Heart left ventricle (tissue), 16 donors: ENCODE measurements at regions of chr9 and their contacts with region 1.

Region 1: GRCh38 chr9:124708633-124709291 is 62.3 kb downstream of the NR6A1 start:
- DNase-seq: no peak
- ATAC-seq: no peak
- H3K4me3 ChIP-seq: no peak overlapping the region
- H3K27ac ChIP-seq: no peak overlapping the region
- H3K4me1 ChIP-seq: peaks cover 0 to 13% (median 0%) of the 10 kb centered on the region in 12 donors
- H3K27me3 ChIP-seq: no peaks in the 10 kb centered on the region
- CTCF ChIP-seq: no peak
- POLR2A ChIP-seq: no peak

Region 2: DNA sequence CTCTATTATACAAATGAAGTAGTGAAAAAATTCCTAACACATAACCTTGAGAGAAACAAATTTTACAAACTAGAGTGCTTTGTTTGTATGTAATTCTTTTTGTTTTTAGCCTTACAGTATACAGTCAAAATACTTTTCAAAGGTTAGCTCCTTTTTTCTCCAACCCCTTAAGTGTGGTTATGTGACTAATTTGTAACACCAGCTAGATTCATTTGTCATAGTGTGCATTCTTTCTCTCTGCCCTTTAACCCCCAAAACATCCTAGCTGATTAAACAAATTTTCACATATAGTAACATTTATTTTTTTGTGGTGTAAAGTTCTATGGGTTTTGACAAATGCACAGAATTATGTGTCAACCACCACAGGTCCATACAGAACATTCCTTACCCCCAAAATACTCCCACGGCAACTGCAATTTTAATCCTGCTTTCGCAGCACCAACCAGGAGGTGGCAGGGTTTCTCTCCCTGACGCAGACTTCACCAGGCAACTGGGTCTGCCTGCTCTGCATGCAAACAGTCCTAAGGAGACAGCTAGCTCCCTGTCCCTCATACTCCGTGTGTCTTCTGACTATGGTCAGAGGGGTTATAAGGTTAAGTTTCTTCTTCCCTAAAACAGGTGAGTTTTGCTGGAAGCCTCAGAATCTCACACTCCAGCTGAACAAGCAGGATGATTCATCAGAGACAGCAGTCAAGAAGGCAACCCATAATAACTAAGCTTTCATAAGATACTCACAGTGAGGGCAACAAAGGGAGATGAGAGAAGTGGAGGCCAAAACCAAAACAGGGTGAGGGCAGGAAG is 157.1 kb before region 1 on chr9:
- intact Hi-C with region 1: loop called (anchors 1 to 10 kb)
- DNase-seq: peak in 4 of 5 donors; percentile 15 to 32 (median 27)
- ATAC-seq: peak; percentile 68 to 85 (median 76)
- H3K4me3 ChIP-seq: no peak overlapping the region
- H3K27ac ChIP-seq: no peak overlapping the region
- H3K4me1 ChIP-seq: peaks cover 0 to 17% (median 0%) of the 10 kb centered on the region in 12 donors
- H3K27me3 ChIP-seq: no peaks in the 10 kb centered on the region
- CTCF ChIP-seq: peak in 11 of 12 donors; percentile 15 to 61 (median 50)
- POLR2A ChIP-seq: no peak

Region 3: GRCh38 chr9:124743686-124744348 is 35.1 kb after region 1 on chr9:
- intact Hi-C with region 1: no loop called
- DNase-seq: no peak
- ATAC-seq: no peak
- H3K4me3 ChIP-seq: no peak overlapping the region
- H3K27ac ChIP-seq: no peak overlapping the region
- H3K4me1 ChIP-seq: peaks cover 0 to 4% (median 0%) of the 10 kb centered on the region in 12 donors
- H3K27me3 ChIP-seq: no peaks in the 10 kb centered on the region
- CTCF ChIP-seq: no peak
- POLR2A ChIP-seq: no peak

Region 4: GRCh38 chr9:124771021-124771866 is 62.5 kb after region 1 on chr9 and contains the start of gene NR6A1:
- intact Hi-C with region 1: no loop called
- DNase-seq: peak; percentile 95 to 98 (median 97)
- ATAC-seq: peak; percentile 94 to 97 (median 95)
- H3K4me3 ChIP-seq: peak within 1 kb of the TSS; percentile 68 to 96 (median 90)
- H3K27ac ChIP-seq: peak within 1 kb of the TSS in 11 of 12 donors; percentile 50 to 82 (median 70)
- H3K4me1 ChIP-seq: peaks cover 0 to 52% (median 18%) of the 10 kb centered on the region in 12 donors
- H3K27me3 ChIP-seq: peaks cover 0 to 30% (median 10%) of the 10 kb centered on the region in 9 donors
- CTCF ChIP-seq: peak in 11 of 12 donors; percentile 9 to 63 (median 35)
- POLR2A ChIP-seq: peak; percentile 9 to 41
- total RNA-seq, gene NR6A1: 1.1 to 5.7 (median 1.6) TPM